H1 (cell line): ENCODE measurements at regions of chr11 and their contacts with region 1.

Region 1: GRCh38 chr11:113896156-113896879 is 8.3 kb upstream of the HTR3B start:
- DNase-seq: peak in 1 of 2 experiments; percentile 56
- H3K4me3 ChIP-seq: no peak overlapping the region; a peak in 1 of 8 replicates
- H3K27ac ChIP-seq: no peak overlapping the region
- H3K4me1 ChIP-seq: peaks cover 0 to 13% (median 2%) of the 10 kb centered on the region in 4 experiments; a peak in 4 of 7 replicates
- H3K27me3 ChIP-seq: no peaks in the 10 kb centered on the region
- CTCF ChIP-seq: peak; percentile 58 to 76 (median 71)
- EP300 ChIP-seq: no peak
- POLR2A ChIP-seq: no peak
- RAD21 ChIP-seq: peak; percentile 79 to 81

Region 2: DNA sequence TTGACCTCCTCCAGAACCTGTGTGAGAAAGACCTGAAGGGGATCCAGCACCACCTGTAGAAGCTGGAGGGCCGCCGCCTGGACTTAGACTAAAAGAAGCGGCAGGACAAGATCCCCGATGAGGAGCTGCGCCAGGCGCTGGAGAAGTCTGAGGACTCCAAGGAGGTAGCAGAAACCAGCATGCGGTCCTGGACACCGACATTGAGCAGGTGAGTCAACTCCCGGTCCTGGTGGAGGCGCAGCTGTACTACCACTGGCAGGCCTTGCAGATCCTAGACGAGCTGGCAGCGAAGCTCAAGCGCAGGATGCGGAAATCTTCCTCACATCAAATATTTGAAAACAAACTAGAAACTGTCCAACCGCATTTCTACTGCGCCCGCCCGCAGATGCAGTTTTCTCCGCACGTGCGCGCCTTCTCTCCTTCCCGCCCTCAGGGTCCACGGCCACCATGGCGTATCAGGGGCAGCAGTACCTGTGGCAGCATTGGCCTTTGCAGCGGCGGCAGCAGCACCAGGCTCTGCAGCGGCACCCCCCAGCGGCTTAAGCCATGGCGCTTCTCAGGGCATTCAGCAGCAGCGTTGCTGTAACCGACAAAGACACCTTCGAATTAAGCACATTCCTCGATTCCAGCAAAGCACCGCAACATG is 106.5 kb before region 1 on chr11:
- CTCF ChIA-PET with region 1: no interaction called
- POLR2A ChIA-PET with region 1: no interaction called
- DNase-seq: no peak
- H3K4me3 ChIP-seq: no peak overlapping the region
- H3K27ac ChIP-seq: no peak overlapping the region
- H3K4me1 ChIP-seq: no peaks in the 10 kb centered on the region
- H3K27me3 ChIP-seq: no peaks in the 10 kb centered on the region
- CTCF ChIP-seq: no peak
- EP300 ChIP-seq: no peak
- POLR2A ChIP-seq: no peak
- RAD21 ChIP-seq: no peak; a peak in 1 of 4 replicates

Region 3: DNA sequence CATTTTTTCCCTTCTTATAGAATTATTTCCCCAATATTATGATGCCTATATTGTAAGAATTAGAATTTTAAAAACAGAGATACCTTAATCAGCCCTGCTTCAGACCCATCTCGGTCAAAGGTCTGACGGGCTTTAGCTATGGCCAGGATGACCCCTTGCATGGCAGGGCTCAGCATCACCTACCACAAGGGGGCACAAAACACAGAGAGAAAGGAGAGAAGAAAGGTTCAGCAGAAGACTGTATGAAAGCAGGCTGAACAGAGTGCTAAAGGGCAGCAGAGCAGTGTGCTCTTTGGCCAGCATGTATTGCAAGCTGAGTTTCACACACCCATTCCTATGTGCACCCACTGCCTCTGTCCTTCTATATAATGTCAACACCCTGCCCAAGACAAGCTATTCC is 89.9 kb before region 1 on chr11:
- CTCF ChIA-PET with region 1: interaction called, 21 read pairs
- POLR2A ChIA-PET with region 1: no interaction called
- DNase-seq: peak in 1 of 2 experiments; percentile 70
- H3K4me3 ChIP-seq: no peak overlapping the region
- H3K27ac ChIP-seq: no peak overlapping the region
- H3K4me1 ChIP-seq: no peaks in the 10 kb centered on the region
- H3K27me3 ChIP-seq: no peaks in the 10 kb centered on the region
- CTCF ChIP-seq: peak; percentile 69 to 87 (median 70)
- EP300 ChIP-seq: no peak
- POLR2A ChIP-seq: no peak
- RAD21 ChIP-seq: peak; percentile 62 to 73

Region 4: DNA sequence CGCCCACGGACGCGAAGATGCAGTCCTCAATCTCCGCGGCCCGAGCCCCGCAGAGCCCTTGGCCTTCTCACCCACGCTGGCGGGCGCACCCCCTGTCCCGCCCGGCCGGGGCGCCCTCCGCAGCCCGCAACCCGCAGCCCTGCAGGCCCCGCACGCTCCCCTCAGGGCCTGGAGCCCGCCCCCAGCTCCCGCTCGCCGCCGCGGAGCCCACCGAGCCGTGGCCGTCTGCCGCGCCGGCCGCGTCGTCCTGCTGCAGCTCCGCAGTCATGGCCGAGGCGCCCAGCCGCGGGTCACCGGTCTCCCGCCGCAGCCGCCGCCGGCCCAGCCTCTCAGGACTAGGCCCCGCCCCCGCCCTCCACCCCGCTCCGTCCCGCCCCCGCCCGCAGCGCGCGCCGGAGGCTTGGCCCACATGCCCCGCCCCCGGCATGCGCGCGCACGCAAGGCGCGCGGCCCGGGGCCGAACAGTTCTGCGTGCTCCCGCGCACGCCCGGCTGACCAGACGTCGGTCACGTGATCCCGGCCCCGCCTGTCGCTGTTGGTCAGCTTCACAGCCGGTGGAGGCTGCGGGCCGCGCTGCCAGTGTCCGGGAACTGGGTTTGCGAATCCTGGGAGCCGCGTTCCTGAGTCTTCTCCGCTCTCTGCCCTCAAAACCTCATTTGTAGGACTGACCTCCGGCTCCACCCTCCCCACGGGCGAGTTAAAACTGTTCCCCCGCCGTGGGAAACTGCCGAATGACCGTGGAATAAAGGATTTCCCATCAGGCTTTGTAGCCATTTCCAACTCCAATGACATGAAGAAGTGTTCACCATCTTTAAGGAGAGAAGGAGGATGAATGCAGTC is 20.9 kb before region 1 on chr11 and contains the start of gene USP28:
- CTCF ChIA-PET with region 1: interaction called, 8 read pairs
- POLR2A ChIA-PET with region 1: interaction called, 20 read pairs
- DNase-seq: peak; percentile 84 to 96
- H3K4me3 ChIP-seq: peak within 1 kb of the TSS; percentile 78 to 100 (median 90)
- H3K27ac ChIP-seq: peak within 1 kb of the TSS; percentile 83; the same call in 1 of the 2 replicates
- H3K4me1 ChIP-seq: peaks cover 4 to 8% (median 7%) of the 10 kb centered on the region in 4 experiments; a peak in 4 of 7 replicates
- H3K27me3 ChIP-seq: no peaks in the 10 kb centered on the region
- CTCF ChIP-seq: no peak
- EP300 ChIP-seq: no peak; a peak in 1 of 3 replicates
- POLR2A ChIP-seq: peak; percentile 64 to 95
- RAD21 ChIP-seq: no peak
- total RNA-seq, gene USP28: 110 and 119 TPM in 2 replicates

Region 5: GRCh38 chr11:113884361-113884836 is 11.9 kb before region 1 on chr11:
- CTCF ChIA-PET with region 1: interaction called, 39 read pairs
- POLR2A ChIA-PET with region 1: interaction called, 5 read pairs
- DNase-seq: peak in 1 of 2 experiments; percentile 62
- H3K4me3 ChIP-seq: no peak overlapping the region
- H3K27ac ChIP-seq: no peak overlapping the region
- H3K4me1 ChIP-seq: peaks cover 0 to 8% (median 0%) of the 10 kb centered on the region in 4 experiments; a peak in 2 of 7 replicates
- H3K27me3 ChIP-seq: no peaks in the 10 kb centered on the region
- CTCF ChIP-seq: no peak
- EP300 ChIP-seq: no peak; a peak in 1 of 3 replicates
- POLR2A ChIP-seq: no peak
- RAD21 ChIP-seq: no peak

Region 6: GRCh38 chr11:113952588-113952987 is 56.3 kb after region 1 on chr11:
- CTCF ChIA-PET with region 1: interaction called, 23 read pairs
- POLR2A ChIA-PET with region 1: no interaction called
- DNase-seq: no peak
- H3K4me3 ChIP-seq: no peak overlapping the region
- H3K27ac ChIP-seq: no peak overlapping the region
- H3K4me1 ChIP-seq: peaks cover 2 to 11% (median 6%) of the 10 kb centered on the region in 4 experiments
- H3K27me3 ChIP-seq: peaks cover 0 to 2% (median 0%) of the 10 kb centered on the region in 4 experiments; a peak in 2 of 7 replicates
- CTCF ChIP-seq: no peak
- EP300 ChIP-seq: no peak
- POLR2A ChIP-seq: no peak
- RAD21 ChIP-seq: no peak

Region 7: GRCh38 chr11:113974741-113975470 is 78.6 kb after region 1 on chr11 and contains the start of gene HTR3A:
- CTCF ChIA-PET with region 1: interaction called, 17 read pairs
- POLR2A ChIA-PET with region 1: no interaction called
- DNase-seq: peak; percentile 43 to 76
- H3K4me3 ChIP-seq: peak within 1 kb of the TSS in 1 of 4 experiments; percentile 26; a peak in 3 of 8 replicates
- H3K27ac ChIP-seq: no peak within 1 kb of the TSS
- H3K4me1 ChIP-seq: peaks cover 0 to 14% (median 13%) of the 10 kb centered on the region in 4 experiments; a peak in 6 of 7 replicates
- H3K27me3 ChIP-seq: peaks cover 0 to 3% (median 0%) of the 10 kb centered on the region in 4 experiments; a peak in 1 of 7 replicates
- CTCF ChIP-seq: peak in 1 of 3 experiments; percentile 32; a peak in 1 of 4 replicates
- EP300 ChIP-seq: no peak
- POLR2A ChIP-seq: no peak
- RAD21 ChIP-seq: no peak; a peak in 1 of 4 replicates
- total RNA-seq, gene HTR3A: 6.5 and 7.5 TPM in 2 replicates

Region 8: GRCh38 chr11:114001416-114001815 is 105.1 kb after region 1 on chr11:
- CTCF ChIA-PET with region 1: interaction called, 14 read pairs
- POLR2A ChIA-PET with region 1: no interaction called
- DNase-seq: no peak
- H3K4me3 ChIP-seq: no peak overlapping the region
- H3K27ac ChIP-seq: no peak overlapping the region
- H3K4me1 ChIP-seq: peaks cover 0 to 5% (median 1%) of the 10 kb centered on the region in 4 experiments; a peak in 5 of 7 replicates
- H3K27me3 ChIP-seq: no peaks in the 10 kb centered on the region
- CTCF ChIP-seq: no peak
- EP300 ChIP-seq: no peak
- POLR2A ChIP-seq: no peak
- RAD21 ChIP-seq: no peak